Cardiac septum (tissue), 1 donor: ENCODE measurements at regions of chr13 and their contacts with region 1.

Region 1: GRCh38 chr13:33610471-33611015 is 207.4 kb upstream of the RFC3 start:
- DNase-seq: peak; percentile 89

Region 2: DNA sequence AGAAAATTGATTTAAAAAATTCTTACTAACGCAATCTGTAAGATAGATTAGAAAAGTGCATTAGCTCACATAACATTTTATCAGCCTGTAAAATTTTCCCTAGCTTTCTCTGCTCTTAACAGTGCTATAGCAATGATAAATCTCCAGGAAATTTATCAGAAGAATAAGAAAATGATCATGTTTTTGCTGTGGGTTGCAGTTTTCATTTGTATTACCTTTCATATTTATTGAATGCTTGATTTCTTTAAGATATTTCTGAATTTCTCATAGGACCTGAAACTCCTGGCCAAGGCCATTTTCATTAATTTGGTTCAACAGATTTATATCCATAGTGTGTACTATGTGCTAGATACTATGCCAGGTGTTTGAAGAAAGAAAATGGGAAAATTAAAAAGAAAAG is 194.7 kb before region 1 on chr13:
- intact Hi-C with region 1: no loop called
- DNase-seq: no peak

Region 3: DNA sequence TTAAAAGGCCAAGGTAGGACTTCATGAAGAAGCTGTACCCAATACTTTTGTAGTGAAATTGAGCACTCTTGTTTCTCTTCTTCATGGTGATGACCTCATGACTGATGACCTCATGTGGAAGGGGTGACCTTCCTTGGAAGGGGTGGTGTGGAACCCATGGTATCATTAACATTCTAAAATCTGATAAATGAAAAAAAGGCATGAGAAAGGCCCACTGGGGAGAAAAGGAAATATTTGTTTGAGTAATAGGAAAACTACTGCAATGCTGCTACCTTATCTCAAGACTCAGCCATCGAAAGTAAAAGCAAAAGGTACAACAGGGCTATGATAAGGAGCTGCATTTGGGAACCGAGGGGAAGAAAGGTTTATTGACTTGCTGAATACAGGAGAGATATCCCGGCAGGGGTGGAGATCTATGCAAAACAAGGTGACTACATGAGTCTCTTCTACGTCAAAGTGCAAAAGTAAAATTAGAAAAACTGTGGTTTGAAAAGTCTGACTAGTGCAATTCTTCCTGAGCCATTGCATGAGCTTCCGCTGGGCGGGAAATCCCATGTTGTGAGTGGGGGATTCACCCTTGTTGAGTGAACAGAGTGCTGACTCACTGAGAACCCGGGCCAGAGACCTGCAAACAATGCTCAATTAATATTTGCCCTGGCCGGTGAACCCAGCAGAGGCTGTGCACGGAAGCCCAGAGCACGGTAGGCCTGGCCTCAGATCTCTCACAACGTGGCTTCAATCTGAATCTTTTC is 68.5 kb after region 1 on chr13:
- intact Hi-C with region 1: loop called (anchors 1 kb)
- DNase-seq: peak; percentile 87